ENCODE measurements at regions of chr17 and their contacts with region 1.

Region 1: GRCh38 chr17:49997791-49998703 is 3.0 kb upstream of the DLX3 start:
- DNase-seq: peak; percentile 89
- ATAC-seq: peak; percentile 78
- H3K4me3 ChIP-seq: no peak overlapping the region
- H3K4me3 Mint-ChIP-seq: no peak overlapping the region
- H3K27ac ChIP-seq: no peak overlapping the region
- H3K27ac Mint-ChIP-seq: no peak overlapping the region
- H3K4me1 ChIP-seq: peaks cover 42 to 45% of the 10 kb centered on the region in 2 donors
- H3K4me1 Mint-ChIP-seq: peaks cover 38% of the 10 kb centered on the region
- H3K27me3 ChIP-seq: peaks cover 0 to 74% (median 52%) of the 10 kb centered on the region in 4 experiments
- H3K27me3 Mint-ChIP-seq: peaks cover 75% of the 10 kb centered on the region
- CTCF ChIP-seq: peak; percentile 92

Region 2: DNA sequence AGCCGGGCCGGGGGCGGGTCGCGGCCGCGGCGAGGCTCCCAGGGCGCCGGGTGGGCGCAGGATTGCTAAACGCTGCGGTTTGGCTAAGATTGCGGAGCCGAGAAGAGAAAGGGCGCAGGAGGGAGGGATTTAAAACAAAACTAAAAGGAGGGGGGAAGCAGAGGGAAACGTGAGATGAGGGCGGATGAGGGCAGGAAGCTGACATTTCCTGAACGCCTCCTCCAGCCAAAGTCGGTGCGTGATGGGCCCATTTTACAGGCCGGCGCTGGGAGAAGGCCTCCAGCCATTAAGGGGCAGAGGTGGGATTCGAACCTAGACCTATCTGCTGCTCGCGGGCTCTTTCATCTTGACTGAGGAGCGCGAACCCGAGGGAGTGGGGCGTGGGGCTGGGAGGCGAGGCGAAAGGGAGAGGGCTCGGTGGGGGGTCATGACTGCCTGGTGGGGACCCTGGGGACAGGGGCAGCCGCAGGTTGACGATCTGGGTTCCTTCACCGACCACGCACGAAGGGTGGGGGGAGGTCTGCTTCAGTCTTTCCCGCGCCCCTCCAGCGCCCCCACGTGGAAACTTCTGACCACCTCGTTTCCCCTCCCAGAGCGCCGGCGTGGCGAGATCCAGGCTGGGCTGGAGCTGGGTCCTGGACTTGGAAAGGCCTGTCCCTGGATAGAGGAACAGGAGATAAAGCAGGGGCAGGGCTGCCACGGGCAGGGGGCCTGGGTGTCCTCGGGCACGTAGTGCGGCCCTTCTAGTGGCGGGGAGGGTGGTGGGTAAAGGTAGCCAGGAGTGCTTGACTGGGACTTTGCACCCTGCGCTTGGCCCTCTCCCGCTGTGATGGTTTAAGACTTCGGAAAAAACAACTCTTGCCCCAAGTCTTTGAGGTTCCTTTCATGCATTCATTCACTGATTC is 146.4 kb before region 1 on chr17:
- CTCF ChIA-PET with region 1: interaction called, 12 read pairs
- POLR2A ChIA-PET with region 1: no interaction called
- intact Hi-C with region 1: no loop called
- DNase-seq: peak; percentile 75
- ATAC-seq: peak; percentile 68
- H3K4me3 ChIP-seq: peak overlapping the region; percentile 60 to 87 (median 69)
- H3K4me3 Mint-ChIP-seq: peak overlapping the region; percentile 92
- H3K27ac ChIP-seq: peak overlapping the region in 1 of 2 donors; percentile 29
- H3K27ac Mint-ChIP-seq: peak overlapping the region; percentile 74
- H3K4me1 ChIP-seq: peaks cover 12 to 15% of the 10 kb centered on the region in 2 donors
- H3K4me1 Mint-ChIP-seq: peaks cover 14% of the 10 kb centered on the region
- H3K27me3 ChIP-seq: peaks cover 0 to 23% (median 6%) of the 10 kb centered on the region in 4 experiments
- H3K27me3 Mint-ChIP-seq: peaks cover 25% of the 10 kb centered on the region
- CTCF ChIP-seq: peak; percentile 73

Region 3: GRCh38 chr17:49886021-49886420 is 112.0 kb before region 1 on chr17:
- CTCF ChIA-PET with region 1: interaction called, 45 read pairs
- POLR2A ChIA-PET with region 1: no interaction called
- intact Hi-C with region 1: no loop called
- DNase-seq: no peak
- ATAC-seq: no peak
- H3K4me3 ChIP-seq: no peak overlapping the region
- H3K4me3 Mint-ChIP-seq: no peak overlapping the region
- H3K27ac ChIP-seq: no peak overlapping the region
- H3K27ac Mint-ChIP-seq: no peak overlapping the region
- H3K4me1 ChIP-seq: peaks cover 0 to under 1% of the 10 kb centered on the region in 2 donors
- H3K4me1 Mint-ChIP-seq: no peaks in the 10 kb centered on the region
- H3K27me3 ChIP-seq: peaks cover 0 to 39% (median 4%) of the 10 kb centered on the region in 4 experiments
- H3K27me3 Mint-ChIP-seq: peaks cover 46% of the 10 kb centered on the region
- CTCF ChIP-seq: no peak

Region 4: DNA sequence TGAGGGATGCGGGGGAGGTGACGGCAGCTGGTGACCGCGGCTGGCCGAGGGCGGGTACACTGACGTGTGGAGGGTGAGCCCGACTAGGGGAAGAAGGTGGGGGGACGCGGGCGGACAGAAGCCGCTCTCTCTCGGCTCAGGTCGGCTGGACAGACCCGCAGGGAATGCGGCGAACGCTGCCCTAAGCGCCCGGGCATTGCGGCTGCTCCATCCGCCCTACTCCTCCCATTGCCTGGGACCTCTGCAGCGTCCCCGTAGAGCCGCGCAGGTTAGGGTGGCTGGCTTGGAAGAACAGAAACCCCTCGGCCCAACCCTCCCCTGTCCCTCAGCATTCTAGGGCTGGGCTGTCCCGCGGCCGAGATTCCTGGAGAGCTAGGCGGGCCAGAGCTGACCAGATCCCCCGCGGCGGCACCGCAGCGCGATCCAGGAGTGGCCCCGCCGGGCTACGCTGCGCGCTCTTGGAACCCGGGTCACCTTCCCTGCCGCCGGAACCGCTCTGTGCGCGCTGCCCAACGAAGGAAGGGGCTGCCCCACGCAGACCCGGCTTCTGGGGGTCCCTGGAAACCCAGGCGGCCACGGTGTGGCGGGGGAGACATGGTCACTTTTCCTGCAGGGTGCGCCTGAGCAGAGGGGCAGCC is 26.1 kb before region 1 on chr17:
- CTCF ChIA-PET with region 1: interaction called, 24 read pairs
- POLR2A ChIA-PET with region 1: no interaction called
- intact Hi-C with region 1: no loop called
- DNase-seq: no peak
- ATAC-seq: no peak
- H3K4me3 ChIP-seq: no peak overlapping the region
- H3K4me3 Mint-ChIP-seq: no peak overlapping the region
- H3K27ac ChIP-seq: no peak overlapping the region
- H3K27ac Mint-ChIP-seq: no peak overlapping the region
- H3K4me1 ChIP-seq: peaks cover 41 to 47% of the 10 kb centered on the region in 2 donors
- H3K4me1 Mint-ChIP-seq: peaks cover 29% of the 10 kb centered on the region
- H3K27me3 ChIP-seq: peaks cover 0 to 90% (median 57%) of the 10 kb centered on the region in 4 experiments
- H3K27me3 Mint-ChIP-seq: peaks cover 71% of the 10 kb centered on the region
- CTCF ChIP-seq: no peak

Region 5: DNA sequence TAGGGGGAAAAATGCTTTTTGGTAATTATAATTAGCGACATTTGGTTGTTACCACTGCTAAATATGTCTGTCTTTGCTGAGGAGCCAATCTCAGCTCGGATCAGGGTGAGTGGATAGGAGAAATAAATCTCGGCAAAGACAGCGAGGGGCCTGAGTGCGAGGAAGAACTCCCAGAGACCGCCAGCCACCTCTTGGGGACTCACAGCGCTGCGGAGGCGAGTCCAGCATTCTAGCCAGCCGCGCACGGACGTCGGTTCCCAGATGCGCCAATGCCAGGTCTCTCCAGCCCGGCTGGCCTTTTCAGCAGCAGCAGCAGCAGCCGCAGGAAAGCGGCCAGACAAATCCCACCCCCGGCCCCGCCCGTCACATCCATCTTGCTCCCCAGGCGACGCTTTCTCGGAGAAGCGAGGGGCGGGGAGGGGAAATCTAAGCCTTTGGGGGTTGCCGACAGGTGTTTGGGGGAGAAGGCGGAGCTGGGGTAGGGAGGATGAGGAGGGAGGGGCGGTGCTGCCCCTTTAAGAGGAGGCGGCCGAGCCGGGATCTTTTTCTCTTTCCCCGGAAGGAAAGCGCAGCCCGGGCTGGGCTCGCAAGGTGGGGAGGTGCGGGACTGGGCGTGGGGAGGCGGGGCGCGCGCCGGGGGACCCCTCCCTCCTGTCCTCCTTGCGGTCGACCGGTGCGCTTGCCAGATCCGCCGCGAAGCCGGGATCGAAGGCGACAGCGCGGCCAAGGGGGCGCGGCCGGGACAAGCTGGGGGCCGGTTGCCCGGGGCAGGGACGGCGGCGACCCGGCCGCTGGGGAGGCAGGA is 57.6 kb after region 1 on chr17 and contains the start of gene ITGA3:
- CTCF ChIA-PET with region 1: interaction called, 25 read pairs
- POLR2A ChIA-PET with region 1: interaction called, 7 read pairs
- intact Hi-C with region 1: no loop called
- DNase-seq: peak; percentile 62
- ATAC-seq: peak; percentile 56
- H3K4me3 ChIP-seq: peak within 1 kb of the TSS; percentile 40 to 80 (median 64)
- H3K4me3 Mint-ChIP-seq: peak within 1 kb of the TSS; percentile 92
- H3K27ac ChIP-seq: no peak within 1 kb of the TSS
- H3K27ac Mint-ChIP-seq: peak within 1 kb of the TSS; percentile 75
- H3K4me1 ChIP-seq: peaks cover 11 to 20% of the 10 kb centered on the region in 2 donors
- H3K4me1 Mint-ChIP-seq: peaks cover 22% of the 10 kb centered on the region
- H3K27me3 ChIP-seq: peaks cover 0 to 42% (median 3%) of the 10 kb centered on the region in 4 experiments
- H3K27me3 Mint-ChIP-seq: peaks cover 17% of the 10 kb centered on the region
- CTCF ChIP-seq: no peak
- total RNA-seq, gene ITGA3: 11.9 and 13.0 TPM in 2 replicates

Region 6: GRCh38 chr17:50111734-50112655 is 113.9 kb after region 1 on chr17:
- CTCF ChIA-PET with region 1: no interaction called
- POLR2A ChIA-PET with region 1: no interaction called
- intact Hi-C with region 1: no loop called
- DNase-seq: no peak
- ATAC-seq: no peak
- H3K4me3 ChIP-seq: no peak overlapping the region
- H3K4me3 Mint-ChIP-seq: no peak overlapping the region
- H3K27ac ChIP-seq: no peak overlapping the region
- H3K27ac Mint-ChIP-seq: no peak overlapping the region
- H3K4me1 ChIP-seq: peaks cover 4 to 14% of the 10 kb centered on the region in 2 donors
- H3K4me1 Mint-ChIP-seq: peaks cover 11% of the 10 kb centered on the region
- H3K27me3 ChIP-seq: peaks cover 0 to 24% (median 12%) of the 10 kb centered on the region in 4 experiments
- H3K27me3 Mint-ChIP-seq: peaks cover 25% of the 10 kb centered on the region
- CTCF ChIP-seq: no peak

Region 7: DNA sequence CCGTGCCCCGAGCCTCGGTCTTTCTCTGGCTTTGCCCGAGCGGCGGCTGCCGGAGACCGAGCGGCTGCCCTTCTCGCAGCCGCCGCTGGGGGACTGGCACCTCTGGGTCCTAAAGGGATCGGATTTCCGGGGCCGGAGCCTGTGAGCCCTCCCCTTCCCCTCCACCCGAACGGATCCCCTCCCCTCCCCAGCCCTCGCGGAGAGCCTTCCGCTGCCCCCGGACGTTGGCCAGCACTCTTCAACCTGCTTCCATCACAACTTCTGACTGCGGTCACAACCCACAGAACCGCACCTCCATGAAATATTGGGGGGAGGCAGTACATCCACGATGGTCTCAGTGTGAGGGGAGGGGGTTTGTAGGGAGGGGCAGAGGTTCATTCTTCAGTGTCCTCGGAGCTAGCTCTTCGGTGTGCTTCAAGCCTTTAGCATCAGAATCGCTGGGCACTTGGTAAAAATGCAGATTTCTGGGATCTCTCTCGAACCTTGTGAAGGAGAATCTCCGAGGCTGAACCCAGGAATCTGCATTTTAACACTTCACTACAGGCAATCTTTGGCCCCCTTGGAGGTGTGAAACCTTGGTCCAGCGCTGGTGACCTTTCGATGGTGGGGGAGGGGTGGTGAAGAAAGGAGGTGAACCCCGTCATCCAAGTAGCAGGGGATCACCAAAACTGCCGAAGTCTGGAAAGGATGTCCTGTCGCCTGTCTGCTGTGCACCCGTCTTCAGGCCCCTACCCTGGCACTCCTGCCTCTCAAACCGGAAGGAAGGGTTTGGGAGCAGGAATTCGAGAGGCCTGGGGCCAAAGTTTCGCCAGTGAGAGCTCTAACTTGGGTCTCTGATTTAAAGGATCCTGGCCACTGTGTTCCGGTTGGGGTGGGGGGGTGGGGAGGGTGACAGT is 153.2 kb after region 1 on chr17:
- CTCF ChIA-PET with region 1: no interaction called
- POLR2A ChIA-PET with region 1: no interaction called
- intact Hi-C with region 1: no loop called
- DNase-seq: peak; percentile 90
- ATAC-seq: peak; percentile 48
- H3K4me3 ChIP-seq: peak overlapping the region; percentile 70 to 97 (median 85)
- H3K4me3 Mint-ChIP-seq: peak overlapping the region; percentile 95
- H3K27ac ChIP-seq: peak overlapping the region; percentile 48 to 75
- H3K27ac Mint-ChIP-seq: peak overlapping the region; percentile 94
- H3K4me1 ChIP-seq: peaks cover 17 to 46% of the 10 kb centered on the region in 2 donors
- H3K4me1 Mint-ChIP-seq: peaks cover 37% of the 10 kb centered on the region
- H3K27me3 ChIP-seq: no peaks in the 10 kb centered on the region
- H3K27me3 Mint-ChIP-seq: no peaks in the 10 kb centered on the region
- CTCF ChIP-seq: peak; percentile 60

Measured in B cell (primary cell).